ENCODE measurements at regions of chr4 and their contacts with region 1.

Region 1: GRCh38 chr4:6974138-6974848 is 64.7 kb downstream of the TBC1D14 start:
- DNase-seq: peak; percentile 87
- H3K4me3 ChIP-seq: no peak overlapping the region
- H3K27ac ChIP-seq: peak overlapping the region in 2 of 8 donors; percentile 18 to 26
- H3K4me1 ChIP-seq: peaks cover 5 to 57% (median 26%) of the 10 kb centered on the region in 6 donors
- H3K27me3 ChIP-seq: no peaks in the 10 kb centered on the region
- CTCF ChIP-seq: peak; percentile 94 to 98 (median 95)
- POLR2A ChIP-seq: no peak

Region 2: DNA sequence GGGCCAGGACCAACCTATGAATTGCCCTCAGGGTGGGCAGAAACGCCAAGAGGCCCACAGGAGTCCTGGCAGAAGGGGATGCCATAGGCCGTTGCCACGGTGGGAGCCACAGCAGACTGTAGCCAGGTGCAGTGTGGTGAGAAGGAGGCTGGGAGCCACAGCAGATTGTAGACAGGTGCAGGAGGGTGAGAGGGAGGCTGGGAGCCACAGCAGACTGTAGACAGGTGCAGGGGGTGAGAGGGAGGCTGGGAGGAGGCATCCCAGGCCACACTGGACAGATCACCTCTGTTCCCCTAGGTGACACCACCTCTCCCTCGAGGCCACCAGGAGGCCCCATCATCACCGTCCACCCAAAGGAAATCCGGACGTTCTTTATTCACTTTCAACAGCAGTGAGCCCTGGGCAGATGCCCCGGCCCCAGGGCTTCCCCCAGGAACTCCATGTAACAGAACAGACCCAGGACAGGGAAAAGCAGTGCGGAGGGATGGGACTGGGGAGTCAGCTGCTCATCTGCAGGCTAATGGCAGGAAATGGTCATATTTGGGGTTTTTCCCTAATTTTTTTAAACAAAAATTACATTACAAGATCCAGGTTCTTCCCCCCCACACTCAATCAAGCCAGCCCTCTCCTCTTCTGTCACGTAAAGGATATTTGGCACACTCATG is 353.3 kb before region 1 on chr4:
- intact Hi-C with region 1: no loop called
- DNase-seq: peak; percentile 64
- H3K4me3 ChIP-seq: no peak overlapping the region
- H3K27ac ChIP-seq: no peak overlapping the region
- H3K4me1 ChIP-seq: no peaks in the 10 kb centered on the region
- H3K27me3 ChIP-seq: no peaks in the 10 kb centered on the region
- CTCF ChIP-seq: no peak
- POLR2A ChIP-seq: no peak

Region 3: GRCh38 chr4:7042697-7043464 is 68.6 kb after region 1 on chr4 and contains the start of gene TADA2B:
- intact Hi-C with region 1: loop called (anchors 10 kb)
- DNase-seq: peak; percentile 98
- H3K4me3 ChIP-seq: peak within 1 kb of the TSS; percentile 85 to 98 (median 92)
- H3K27ac ChIP-seq: peak within 1 kb of the TSS; percentile 88 to 98 (median 92)
- H3K4me1 ChIP-seq: peaks cover 32 to 61% (median 56%) of the 10 kb centered on the region in 6 donors
- H3K27me3 ChIP-seq: no peaks in the 10 kb centered on the region
- CTCF ChIP-seq: peak; percentile 8 to 80 (median 61)
- POLR2A ChIP-seq: peak in 1 of 3 donors; percentile 2
- total RNA-seq, gene TADA2B: 22.6 to 32.2 (median 27.1) TPM